Heart right ventricle (tissue), 16 donors: ENCODE measurements at regions of chr4 and their contacts with region 1.

Region 1: DNA sequence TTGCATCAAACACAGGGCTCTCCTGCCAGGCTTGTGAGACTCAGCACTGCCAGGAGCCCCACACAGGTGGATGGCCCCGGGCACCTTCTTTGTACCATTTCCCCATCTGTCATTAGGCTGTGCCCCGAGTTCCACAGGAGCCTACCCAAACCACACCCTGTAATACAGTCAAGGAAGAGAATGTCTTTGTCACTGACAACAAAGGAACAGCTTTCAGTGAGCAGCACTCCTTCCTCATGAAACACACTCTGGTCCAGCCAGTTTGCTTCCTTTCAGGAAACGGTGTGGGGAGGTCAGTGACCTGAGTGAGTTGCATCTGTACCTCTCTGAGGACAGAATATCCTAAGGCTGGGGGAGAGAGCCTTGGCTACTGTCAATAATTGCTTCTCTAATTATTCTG is 53.7 kb downstream of the LNX1 start:
- DNase-seq: no peak
- ATAC-seq: peak in 6 of 8 donors; percentile 30 to 58 (median 41)
- H3K4me3 ChIP-seq: no peak overlapping the region
- H3K27ac ChIP-seq: peak overlapping the region in 6 of 10 donors; percentile 8 to 51 (median 30)
- H3K4me1 ChIP-seq: peaks cover 0 to 58% (median 28%) of the 10 kb centered on the region in 9 donors
- H3K27me3 ChIP-seq: no peaks in the 10 kb centered on the region
- CTCF ChIP-seq: no peak

Region 2: GRCh38 chr4:53644607-53645006 is 107.0 kb after region 1 on chr4:
- intact Hi-C with region 1: loop called in 1 of 10 experiments (anchors 5 kb)
- DNase-seq: no peak
- ATAC-seq: peak in 3 of 8 donors; percentile 41 to 46 (median 44)
- H3K4me3 ChIP-seq: no peak overlapping the region
- H3K27ac ChIP-seq: no peak overlapping the region
- H3K4me1 ChIP-seq: peaks cover 4 to 58% (median 13%) of the 10 kb centered on the region in 9 donors
- H3K27me3 ChIP-seq: no peaks in the 10 kb centered on the region
- CTCF ChIP-seq: no peak

Region 3: DNA sequence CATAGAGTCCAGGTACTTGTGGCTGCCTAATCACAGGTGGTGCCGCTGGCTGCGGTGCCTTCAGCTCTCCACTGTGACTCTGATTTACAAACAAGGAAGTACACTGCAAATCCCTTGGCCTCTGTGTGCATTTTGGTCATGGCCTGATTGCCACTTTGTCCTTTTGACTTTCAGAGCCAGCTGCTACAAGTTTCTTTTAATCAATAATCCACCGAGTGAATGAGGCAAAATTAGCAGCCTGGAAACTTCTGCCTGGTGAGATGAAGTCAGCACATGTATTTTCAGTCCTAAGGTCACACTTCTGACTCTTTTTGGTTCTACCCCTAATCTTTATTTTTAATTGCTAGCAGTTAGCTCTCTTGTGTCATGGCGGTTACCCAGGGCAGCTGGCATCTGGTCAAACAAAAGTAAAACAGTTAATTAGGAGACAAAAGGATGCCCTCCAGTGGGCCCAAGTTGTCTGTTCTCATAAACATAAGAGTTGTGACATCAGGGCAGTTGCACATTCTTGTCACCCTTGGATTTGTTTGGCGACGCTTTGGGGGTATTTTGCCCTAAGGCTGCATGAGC is 116.0 kb after region 1 on chr4:
- intact Hi-C with region 1: loop called in 2 of 10 experiments (anchors 5 kb)
- DNase-seq: no peak
- ATAC-seq: peak in 4 of 8 donors; percentile 38 to 49 (median 46)
- H3K4me3 ChIP-seq: no peak overlapping the region
- H3K27ac ChIP-seq: peak overlapping the region in 4 of 10 donors; percentile 15 to 80 (median 44)
- H3K4me1 ChIP-seq: peaks cover 0 to 58% (median 20%) of the 10 kb centered on the region in 9 donors
- H3K27me3 ChIP-seq: no peaks in the 10 kb centered on the region
- CTCF ChIP-seq: peak in 6 of 9 donors; percentile 7 to 32 (median 18)

Region 4: DNA sequence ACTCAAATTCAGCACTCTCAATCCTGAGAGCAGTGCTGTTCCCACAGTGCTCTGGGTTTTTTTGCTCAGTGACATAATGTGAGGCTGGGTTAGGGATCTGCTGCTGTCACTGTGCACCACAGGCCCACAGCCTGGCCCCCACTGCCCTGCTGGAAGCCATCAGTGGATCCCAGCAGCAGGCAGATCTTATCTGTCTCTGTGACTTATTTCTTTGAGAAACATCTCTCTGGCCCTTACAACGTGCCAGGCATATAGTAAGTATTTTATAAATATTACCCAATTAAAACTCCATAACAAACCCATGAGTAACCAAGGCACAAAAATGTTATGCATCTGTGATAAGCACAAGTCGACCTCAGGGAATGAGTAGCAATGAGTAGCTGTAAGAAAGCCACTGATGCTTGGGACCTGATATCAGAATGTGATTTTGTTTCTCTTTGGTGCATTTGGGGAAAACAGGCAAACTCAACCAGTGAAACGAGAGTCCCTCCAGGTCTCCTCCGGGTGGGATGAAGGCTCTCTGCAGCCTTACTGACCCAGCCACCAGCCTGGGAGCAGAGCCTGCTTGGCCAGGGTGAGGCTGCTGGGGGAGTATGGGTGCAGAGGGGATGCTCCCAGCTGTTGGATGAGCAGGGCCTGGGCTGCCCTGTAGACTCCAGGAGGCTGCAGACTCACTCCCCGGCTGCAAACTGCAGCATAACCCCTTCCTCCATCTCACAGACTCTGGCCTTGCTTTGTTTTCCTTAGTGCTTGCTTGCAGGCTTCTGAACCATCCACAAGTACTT is 226.4 kb after region 1 on chr4:
- intact Hi-C with region 1: no loop called
- DNase-seq: no peak
- ATAC-seq: peak in 3 of 8 donors; percentile 29 to 53 (median 33)
- H3K4me3 ChIP-seq: no peak overlapping the region
- H3K27ac ChIP-seq: peak overlapping the region in 1 of 10 donors; percentile 12
- H3K4me1 ChIP-seq: peaks cover 0 to 8% (median 0%) of the 10 kb centered on the region in 9 donors
- H3K27me3 ChIP-seq: no peaks in the 10 kb centered on the region
- CTCF ChIP-seq: no peak

Region 5: DNA sequence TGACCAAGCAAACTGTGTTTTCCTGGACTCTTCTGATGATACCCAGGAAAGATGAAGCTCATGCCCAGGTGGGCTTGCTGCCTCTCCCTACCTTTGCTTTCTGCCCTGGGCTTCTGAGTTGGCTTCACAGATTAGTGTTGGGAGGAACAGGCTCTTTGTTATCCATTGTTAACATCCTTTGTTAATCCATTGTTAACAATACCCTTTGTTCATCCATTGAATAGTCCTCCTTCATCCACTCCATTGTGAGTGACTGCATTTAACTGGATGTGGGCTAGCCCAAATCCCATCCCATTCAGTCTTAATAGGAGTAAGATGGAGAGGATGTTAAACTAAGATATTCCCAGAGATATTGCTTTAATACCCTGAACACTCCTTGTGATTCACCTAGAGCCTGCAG is 252.7 kb after region 1 on chr4:
- intact Hi-C with region 1: no loop called
- DNase-seq: no peak
- ATAC-seq: no peak
- H3K4me3 ChIP-seq: no peak overlapping the region
- H3K27ac ChIP-seq: no peak overlapping the region
- H3K4me1 ChIP-seq: peaks cover 0 to 8% (median 0%) of the 10 kb centered on the region in 9 donors
- H3K27me3 ChIP-seq: peaks cover 0 to 12% (median 4%) of the 10 kb centered on the region in 7 donors
- CTCF ChIP-seq: no peak